Activated CD4-positive, alpha-beta memory T cell treated with anti-CD3 and anti-CD28 coated beads for 36 hours (primary cell): ENCODE measurements at regions of chr18 and their contacts with region 1.

Region 1: GRCh38 chr18:74994502-74995419 is 214.2 kb downstream of the PTGR3 start:
- DNase-seq: peak; percentile 46
- H3K4me3 Mint-ChIP-seq: peak overlapping the region; percentile 64
- H3K27ac Mint-ChIP-seq: peak overlapping the region; percentile 89
- H3K4me1 Mint-ChIP-seq: peaks cover 46% of the 10 kb centered on the region
- H3K27me3 Mint-ChIP-seq: no peaks in the 10 kb centered on the region

Region 2: DNA sequence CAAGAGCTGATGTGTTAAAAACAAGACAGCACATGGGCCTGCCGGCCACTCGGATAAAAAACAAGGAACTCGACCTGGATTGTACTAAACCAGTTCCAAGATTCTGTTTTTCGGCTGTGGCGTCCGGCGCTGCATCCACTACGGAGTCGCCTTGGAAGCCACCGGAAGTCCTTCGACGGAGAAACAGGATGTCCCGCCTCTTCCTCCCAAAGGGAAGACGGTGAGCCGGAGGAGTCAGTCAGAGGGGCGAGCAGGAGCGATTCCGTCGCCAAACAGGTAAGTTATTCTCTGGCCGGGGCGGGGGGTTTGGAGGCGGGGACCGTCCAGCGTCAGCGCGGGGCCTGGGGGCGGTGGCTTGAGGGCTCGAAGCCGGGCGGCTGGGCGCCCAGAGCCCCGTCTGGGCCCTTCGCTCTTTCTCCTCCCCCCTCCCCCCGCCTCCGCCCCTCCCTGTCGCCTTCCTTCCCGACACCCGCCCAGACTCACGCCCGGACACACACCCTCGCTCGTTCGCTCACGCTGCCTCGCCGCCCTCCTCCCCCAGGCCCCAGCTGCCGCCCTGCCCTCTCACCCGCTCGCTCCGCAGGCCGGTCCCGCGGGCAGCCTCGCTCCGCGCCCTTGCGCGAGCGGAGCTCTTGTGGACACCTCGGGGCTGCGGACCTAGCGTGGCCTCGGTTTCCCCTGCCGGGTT is 397.0 kb before region 1 on chr18 and contains the start of gene ZNF407:
- CTCF ChIA-PET with region 1: no interaction called
- POLR2A ChIA-PET with region 1: no interaction called
- intact Hi-C with region 1: loop called (anchors 2 kb)
- DNase-seq: peak; percentile 91
- H3K4me3 Mint-ChIP-seq: peak within 1 kb of the TSS; percentile 96
- H3K27ac Mint-ChIP-seq: peak within 1 kb of the TSS; percentile 99
- H3K4me1 Mint-ChIP-seq: peaks cover 41% of the 10 kb centered on the region
- H3K27me3 Mint-ChIP-seq: no peaks in the 10 kb centered on the region
- total RNA-seq, gene ZNF407: 10.0 to 10.5 TPM

Region 3: GRCh38 chr18:74951165-74951760 is 43.5 kb before region 1 on chr18:
- CTCF ChIA-PET with region 1: no interaction called
- POLR2A ChIA-PET with region 1: no interaction called
- intact Hi-C with region 1: loop called (anchors 2 kb)
- DNase-seq: peak; percentile 36
- H3K4me3 Mint-ChIP-seq: no peak overlapping the region
- H3K27ac Mint-ChIP-seq: peak overlapping the region; percentile 1
- H3K4me1 Mint-ChIP-seq: peaks cover 24% of the 10 kb centered on the region
- H3K27me3 Mint-ChIP-seq: no peaks in the 10 kb centered on the region

Region 4: GRCh38 chr18:74982946-74983635 is 11.7 kb before region 1 on chr18:
- CTCF ChIA-PET with region 1: no interaction called
- POLR2A ChIA-PET with region 1: no interaction called
- intact Hi-C with region 1: no loop called
- DNase-seq: no peak
- H3K4me3 Mint-ChIP-seq: no peak overlapping the region
- H3K27ac Mint-ChIP-seq: no peak overlapping the region
- H3K4me1 Mint-ChIP-seq: no peaks in the 10 kb centered on the region
- H3K27me3 Mint-ChIP-seq: no peaks in the 10 kb centered on the region

Region 5: GRCh38 chr18:75070625-75071483 is 76.1 kb after region 1 on chr18:
- CTCF ChIA-PET with region 1: no interaction called
- POLR2A ChIA-PET with region 1: no interaction called
- intact Hi-C with region 1: loop called (anchors 1 kb)
- DNase-seq: peak; percentile 87
- H3K4me3 Mint-ChIP-seq: peak overlapping the region; percentile 65
- H3K27ac Mint-ChIP-seq: peak overlapping the region; percentile 93
- H3K4me1 Mint-ChIP-seq: peaks cover 40% of the 10 kb centered on the region
- H3K27me3 Mint-ChIP-seq: no peaks in the 10 kb centered on the region